GM12878 (cell line): ENCODE measurements at regions of chr11 and their contacts with region 1.

Region 1: GRCh38 chr11:48244804-48245203 is at the start of gene OR4X2:
- DNase-seq: no peak
- ATAC-seq: no peak
- H3K4me3 ChIP-seq: no peak within 1 kb of the TSS
- H3K27ac ChIP-seq: no peak within 1 kb of the TSS
- H3K4me1 ChIP-seq: no peaks in the 10 kb centered on the region
- H3K27me3 ChIP-seq: no peaks in the 10 kb centered on the region
- CTCF ChIP-seq: no peak
- EP300 ChIP-seq: no peak
- POLR2A ChIP-seq: no peak
- RAD21 ChIP-seq: no peak
- polyA plus RNA-seq, gene OR4X2: not detected

Region 2: GRCh38 chr11:47950396-47950795 is 294.4 kb before region 1 on chr11:
- CTCF ChIA-PET with region 1: no interaction called
- POLR2A ChIA-PET with region 1: no interaction called
- RAD21 ChIA-PET with region 1: no interaction called
- SMC1A ChIA-PET with region 1: no interaction called
- in situ Hi-C with region 1: no loop called
- intact Hi-C with region 1: no loop called
- DNase-seq: peak; percentile 11
- ATAC-seq: peak; percentile 88
- H3K4me3 ChIP-seq: no peak overlapping the region
- H3K27ac ChIP-seq: no peak overlapping the region
- H3K4me1 ChIP-seq: peaks cover 8% of the 10 kb centered on the region; the same call in 1 of the 2 replicates
- H3K27me3 ChIP-seq: no peaks in the 10 kb centered on the region
- CTCF ChIP-seq: no peak
- EP300 ChIP-seq: no peak
- POLR2A ChIP-seq: no peak
- RAD21 ChIP-seq: no peak

Region 3: DNA sequence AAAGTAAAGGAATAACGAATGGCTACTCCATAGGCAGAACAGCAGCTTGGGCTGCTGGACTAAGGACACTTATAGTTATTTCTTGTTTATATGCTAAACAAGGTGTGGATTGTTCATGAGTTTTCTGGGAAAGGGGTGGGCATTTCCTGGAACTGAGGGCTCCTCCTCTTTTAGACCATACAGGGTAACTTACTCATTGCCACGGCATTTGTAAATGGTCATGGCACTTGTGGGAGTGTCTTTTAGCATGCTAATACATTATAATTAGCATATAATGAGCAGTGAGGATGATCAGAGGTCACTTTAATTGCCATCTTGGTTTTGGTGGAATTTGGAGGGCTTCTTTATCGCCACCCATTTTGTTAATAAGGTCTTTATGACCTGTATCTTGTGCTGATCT is 25.8 kb after region 1 on chr11:
- CTCF ChIA-PET with region 1: no interaction called
- POLR2A ChIA-PET with region 1: interaction called, 10 read pairs
- RAD21 ChIA-PET with region 1: no interaction called
- SMC1A ChIA-PET with region 1: no interaction called
- in situ Hi-C with region 1: no loop called
- intact Hi-C with region 1: no loop called
- DNase-seq: no peak
- ATAC-seq: no peak
- H3K4me3 ChIP-seq: no peak overlapping the region
- H3K27ac ChIP-seq: no peak overlapping the region
- H3K4me1 ChIP-seq: no peaks in the 10 kb centered on the region
- H3K27me3 ChIP-seq: no peaks in the 10 kb centered on the region
- CTCF ChIP-seq: no peak
- EP300 ChIP-seq: no peak
- POLR2A ChIP-seq: no peak
- RAD21 ChIP-seq: no peak